Gastrocnemius medialis (tissue), 4 donors: ENCODE measurements at regions of chr3 and their contacts with region 1.

Region 1: GRCh38 chr3:51391075-51391567 is at the start of gene RBM15B:
- DNase-seq: peak; percentile 95 to 97
- ATAC-seq: peak; percentile 81 to 87
- H3K4me3 ChIP-seq: peak within 1 kb of the TSS; percentile 68 to 82 (median 76)
- H3K27ac ChIP-seq: peak within 1 kb of the TSS; percentile 77 to 94 (median 90)
- H3K4me1 ChIP-seq: peaks cover 50 to 60% of the 10 kb centered on the region in 2 donors
- H3K27me3 ChIP-seq: no peaks in the 10 kb centered on the region
- CTCF ChIP-seq: peak in 4 of 5 experiments; percentile 85 to 90 (median 88)
- POLR2A ChIP-seq: peak; percentile 79 to 85
- total RNA-seq, gene RBM15B: 4.9 to 13.7 (median 8.9) TPM

Region 2: GRCh38 chr3:50358911-50359759 is 1032.0 kb before region 1 on chr3 and contains the start of gene TMEM115:
- in situ Hi-C with region 1: no loop called
- intact Hi-C with region 1: loop called (anchors 10 kb)
- DNase-seq: peak; percentile 99
- ATAC-seq: peak; percentile 97 to 99
- H3K4me3 ChIP-seq: peak within 1 kb of the TSS; percentile 79 to 99 (median 82)
- H3K27ac ChIP-seq: peak within 1 kb of the TSS; percentile 93 to 97 (median 94)
- H3K4me1 ChIP-seq: peaks cover 40 to 43% of the 10 kb centered on the region in 2 donors
- H3K27me3 ChIP-seq: no peaks in the 10 kb centered on the region
- CTCF ChIP-seq: no peak
- POLR2A ChIP-seq: peak; percentile 75 to 79
- total RNA-seq, gene TMEM115: 26.9 to 57.8 (median 42.3) TPM

Region 3: DNA sequence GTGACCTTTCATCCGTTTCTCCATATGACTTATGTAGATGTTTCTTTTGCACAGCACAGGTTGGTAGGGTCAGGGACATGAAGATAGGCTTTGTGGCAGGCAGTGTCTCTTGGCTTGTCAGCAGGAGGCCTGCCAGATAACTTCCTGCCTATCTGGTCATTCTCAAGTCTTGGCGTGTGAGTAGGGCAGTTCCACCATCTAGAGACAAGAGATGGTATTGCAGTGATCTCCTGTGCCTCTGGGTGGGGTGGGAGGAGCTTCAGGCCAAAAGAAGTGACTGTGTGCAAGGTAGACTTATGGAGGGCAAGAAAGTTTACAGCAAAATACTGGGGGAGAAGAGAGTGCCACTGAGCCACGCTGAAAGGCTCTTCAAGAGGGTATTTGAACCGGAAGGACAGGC is 291.0 kb after region 1 on chr3:
- in situ Hi-C with region 1: loop called in 1 of 4 experiments (anchors 25 kb)
- intact Hi-C with region 1: no loop called
- DNase-seq: peak; percentile 41 to 69
- ATAC-seq: peak; percentile 77 to 91
- H3K4me3 ChIP-seq: no peak overlapping the region
- H3K27ac ChIP-seq: no peak overlapping the region
- H3K4me1 ChIP-seq: peaks cover 29 to 45% of the 10 kb centered on the region in 2 donors
- H3K27me3 ChIP-seq: no peaks in the 10 kb centered on the region
- CTCF ChIP-seq: peak; percentile 64 to 76 (median 73)
- POLR2A ChIP-seq: no peak